Transverse colon (tissue), 4 donors: ENCODE measurements at regions of chr17 and their contacts with region 1.

Region 1: DNA sequence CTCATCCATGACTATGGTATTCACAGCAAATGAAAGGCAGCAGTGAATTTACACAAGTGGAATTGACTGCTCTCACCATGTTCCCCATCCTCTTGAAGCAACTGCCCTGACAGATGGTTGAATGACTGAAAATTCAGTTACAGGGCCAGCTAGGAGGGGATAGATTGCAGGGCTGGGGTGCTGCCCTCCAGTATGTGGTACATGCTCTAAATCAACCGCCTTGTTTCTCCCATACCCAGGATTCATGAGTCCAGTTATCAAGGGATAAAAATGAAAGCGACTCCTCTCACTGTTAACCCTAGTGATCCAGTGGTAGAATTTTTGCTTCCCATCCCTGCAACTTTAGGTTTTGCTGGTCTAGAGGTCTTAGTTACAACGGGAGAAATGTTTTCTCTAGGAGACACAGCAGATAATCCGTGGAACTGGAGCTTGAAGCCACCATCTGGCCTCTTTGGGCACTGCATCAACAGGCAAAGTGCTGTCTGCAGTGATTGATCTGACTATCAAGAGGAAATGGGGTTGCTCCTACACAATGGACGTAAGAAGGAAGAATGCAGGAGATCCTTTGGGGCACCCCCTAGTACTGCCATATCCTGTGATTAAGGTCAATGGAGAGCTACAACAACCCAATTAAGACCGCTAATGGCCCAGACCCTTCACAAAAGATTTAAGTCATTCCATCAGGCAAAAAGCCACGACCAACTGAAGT is 32.0 kb downstream of the SCPEP1 start:
- DNase-seq: peak; percentile 73
- H3K4me3 ChIP-seq: no peak overlapping the region
- H3K27ac ChIP-seq: no peak overlapping the region
- H3K4me1 ChIP-seq: peaks cover 0 to 7% (median 0%) of the 10 kb centered on the region in 4 donors
- H3K27me3 ChIP-seq: no peaks in the 10 kb centered on the region
- CTCF ChIP-seq: peak; percentile 70 to 79 (median 73)
- EP300 ChIP-seq: no peak
- POLR2A ChIP-seq: no peak

Region 2: GRCh38 chr17:57051886-57052361 is 42.0 kb after region 1 on chr17:
- in situ Hi-C with region 1: no loop called
- intact Hi-C with region 1: loop called (anchors 10 kb)
- DNase-seq: no peak
- H3K4me3 ChIP-seq: no peak overlapping the region
- H3K27ac ChIP-seq: peak overlapping the region in 1 of 4 donors; percentile 79
- H3K4me1 ChIP-seq: peaks cover 0 to 28% (median 13%) of the 10 kb centered on the region in 4 donors
- H3K27me3 ChIP-seq: no peaks in the 10 kb centered on the region
- CTCF ChIP-seq: no peak
- EP300 ChIP-seq: no peak
- POLR2A ChIP-seq: no peak

Region 3: GRCh38 chr17:57114085-57114673 is 104.3 kb after region 1 on chr17:
- in situ Hi-C with region 1: no loop called
- intact Hi-C with region 1: loop called (anchors 10 kb)
- DNase-seq: peak; percentile 68
- H3K4me3 ChIP-seq: no peak overlapping the region
- H3K27ac ChIP-seq: no peak overlapping the region
- H3K4me1 ChIP-seq: peaks cover 9 to 23% (median 19%) of the 10 kb centered on the region in 4 donors
- H3K27me3 ChIP-seq: no peaks in the 10 kb centered on the region
- CTCF ChIP-seq: peak; percentile 78 to 88 (median 88)
- EP300 ChIP-seq: no peak
- POLR2A ChIP-seq: no peak